ENCODE measurements at regions of chr12 and their contacts with region 1.

Region 1: GRCh38 chr12:42482445-42483237 is 106.9 kb downstream of the PRICKLE1 start:
- DNase-seq: peak; percentile 75
- ATAC-seq: peak; percentile 78
- H3K4me3 Mint-ChIP-seq: peak overlapping the region; percentile 66
- H3K27ac Mint-ChIP-seq: no peak overlapping the region
- H3K4me1 Mint-ChIP-seq: peaks cover 9% of the 10 kb centered on the region
- H3K27me3 Mint-ChIP-seq: peaks cover 71% of the 10 kb centered on the region

Region 2: DNA sequence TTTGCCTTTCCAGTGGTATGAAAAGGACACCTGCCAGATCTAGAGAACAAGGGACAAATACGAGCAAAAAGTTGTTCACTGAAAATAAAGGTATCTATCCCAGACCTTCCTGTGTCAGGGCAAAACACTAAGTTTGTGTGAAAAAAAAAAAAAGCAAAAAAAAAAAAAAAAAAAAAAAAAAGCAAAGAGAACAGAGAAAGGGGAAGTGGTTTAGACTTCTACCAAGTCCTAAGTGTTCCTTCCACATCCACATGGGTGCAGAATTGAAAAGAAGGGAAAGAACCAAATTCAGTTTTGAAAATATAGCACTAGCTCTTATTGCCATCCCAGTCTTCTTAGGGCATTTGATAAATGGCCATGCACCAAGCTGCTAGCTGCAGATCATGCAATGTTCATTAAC is 198.5 kb before region 1 on chr12:
- CTCF ChIA-PET with region 1: no interaction called
- POLR2A ChIA-PET with region 1: no interaction called
- intact Hi-C with region 1: no loop called
- DNase-seq: no peak
- ATAC-seq: no peak
- H3K4me3 Mint-ChIP-seq: no peak overlapping the region
- H3K27ac Mint-ChIP-seq: no peak overlapping the region
- H3K4me1 Mint-ChIP-seq: peaks cover 4% of the 10 kb centered on the region
- H3K27me3 Mint-ChIP-seq: peaks cover 3% of the 10 kb centered on the region

Region 3: DNA sequence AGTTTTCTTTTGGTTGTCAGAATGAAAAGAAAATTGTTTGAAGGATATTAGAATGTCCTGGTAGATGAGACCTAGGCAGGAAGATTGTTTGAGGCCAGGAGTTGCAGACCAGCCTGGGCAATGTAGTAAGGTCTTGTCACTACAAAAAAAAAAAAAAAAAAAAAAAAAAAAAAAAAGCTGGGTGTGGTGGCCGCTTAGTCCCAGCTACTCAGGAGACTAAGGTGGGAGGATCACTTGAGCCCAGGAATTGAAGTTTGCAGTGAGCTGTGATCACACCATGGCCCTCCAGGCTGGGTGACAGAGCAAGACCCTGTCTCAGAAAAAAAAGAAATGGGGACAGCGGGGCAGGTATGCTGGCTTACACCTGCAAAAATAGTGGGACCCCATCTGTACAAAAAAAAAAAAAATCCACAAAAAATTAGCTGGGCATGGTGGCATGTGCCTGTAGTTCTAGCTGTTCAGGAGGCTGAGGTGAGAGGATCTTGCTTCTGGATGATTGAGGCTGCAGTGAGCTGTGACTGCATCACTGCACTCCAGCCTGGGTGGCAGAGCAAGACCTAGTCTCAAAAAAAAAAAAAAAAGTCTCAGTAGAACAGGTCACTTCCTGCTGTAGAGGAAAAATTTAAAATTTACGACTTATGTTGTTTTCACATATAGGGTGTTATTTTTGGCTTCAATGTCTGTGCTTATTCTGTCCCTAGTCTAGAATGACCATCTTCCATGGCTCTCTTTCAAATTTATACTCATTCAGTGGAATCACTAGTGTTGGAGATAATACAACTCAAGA is 86.0 kb before region 1 on chr12:
- CTCF ChIA-PET with region 1: no interaction called
- POLR2A ChIA-PET with region 1: no interaction called
- intact Hi-C with region 1: no loop called
- DNase-seq: no peak
- ATAC-seq: peak; percentile 26
- H3K4me3 Mint-ChIP-seq: no peak overlapping the region
- H3K27ac Mint-ChIP-seq: no peak overlapping the region
- H3K4me1 Mint-ChIP-seq: no peaks in the 10 kb centered on the region
- H3K27me3 Mint-ChIP-seq: no peaks in the 10 kb centered on the region

Region 4: DNA sequence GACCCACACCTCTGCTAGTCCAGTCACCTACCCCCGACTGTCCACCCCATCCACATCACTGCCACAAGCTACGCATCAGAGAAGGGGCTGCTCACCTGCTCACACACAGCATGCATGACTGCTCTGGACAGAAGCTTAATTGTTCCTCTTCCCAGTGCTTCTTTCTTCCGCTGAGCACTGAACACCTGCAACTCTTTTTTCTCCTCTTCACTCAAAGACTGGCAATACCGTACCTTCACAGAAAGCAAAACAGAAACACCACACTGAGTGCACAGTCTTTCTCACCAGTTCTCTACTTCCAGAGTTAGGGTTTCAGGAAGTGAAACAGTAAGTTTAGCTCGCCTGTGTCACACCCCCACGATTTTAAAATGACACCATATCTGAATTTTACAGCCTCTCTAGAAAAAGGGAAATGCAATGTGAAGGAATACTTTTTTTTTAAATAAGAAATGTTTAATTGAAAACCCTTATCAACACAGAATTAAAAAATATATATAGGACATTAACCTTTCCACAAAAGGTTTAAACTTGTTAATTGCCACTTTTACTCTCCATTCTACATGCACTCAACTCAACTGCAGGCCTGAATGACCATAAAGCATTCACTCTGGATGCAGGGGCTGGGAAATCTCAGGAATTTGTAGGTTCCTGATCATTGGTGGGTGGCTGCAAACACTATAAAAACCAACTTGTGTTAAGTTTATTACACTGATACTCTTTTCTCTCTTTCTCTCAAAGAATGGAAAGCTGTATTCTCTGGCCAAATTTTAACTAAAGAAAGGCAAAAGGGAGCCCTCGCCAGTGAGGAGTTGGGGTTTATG is 13.1 kb before region 1 on chr12:
- CTCF ChIA-PET with region 1: interaction called, 18 read pairs
- POLR2A ChIA-PET with region 1: no interaction called
- intact Hi-C with region 1: no loop called
- DNase-seq: peak; percentile 7
- ATAC-seq: peak; percentile 92
- H3K4me3 Mint-ChIP-seq: peak overlapping the region; percentile 43
- H3K27ac Mint-ChIP-seq: peak overlapping the region; percentile 6
- H3K4me1 Mint-ChIP-seq: peaks cover 16% of the 10 kb centered on the region
- H3K27me3 Mint-ChIP-seq: peaks cover 23% of the 10 kb centered on the region

Region 5: GRCh38 chr12:42568952-42569915 is 86.6 kb after region 1 on chr12:
- CTCF ChIA-PET with region 1: interaction called, 17 read pairs
- POLR2A ChIA-PET with region 1: no interaction called
- intact Hi-C with region 1: loop called (anchors 1 to 2 kb)
- DNase-seq: no peak
- ATAC-seq: no peak
- H3K4me3 Mint-ChIP-seq: no peak overlapping the region
- H3K27ac Mint-ChIP-seq: no peak overlapping the region
- H3K4me1 Mint-ChIP-seq: no peaks in the 10 kb centered on the region
- H3K27me3 Mint-ChIP-seq: peaks cover 10% of the 10 kb centered on the region

Region 6: DNA sequence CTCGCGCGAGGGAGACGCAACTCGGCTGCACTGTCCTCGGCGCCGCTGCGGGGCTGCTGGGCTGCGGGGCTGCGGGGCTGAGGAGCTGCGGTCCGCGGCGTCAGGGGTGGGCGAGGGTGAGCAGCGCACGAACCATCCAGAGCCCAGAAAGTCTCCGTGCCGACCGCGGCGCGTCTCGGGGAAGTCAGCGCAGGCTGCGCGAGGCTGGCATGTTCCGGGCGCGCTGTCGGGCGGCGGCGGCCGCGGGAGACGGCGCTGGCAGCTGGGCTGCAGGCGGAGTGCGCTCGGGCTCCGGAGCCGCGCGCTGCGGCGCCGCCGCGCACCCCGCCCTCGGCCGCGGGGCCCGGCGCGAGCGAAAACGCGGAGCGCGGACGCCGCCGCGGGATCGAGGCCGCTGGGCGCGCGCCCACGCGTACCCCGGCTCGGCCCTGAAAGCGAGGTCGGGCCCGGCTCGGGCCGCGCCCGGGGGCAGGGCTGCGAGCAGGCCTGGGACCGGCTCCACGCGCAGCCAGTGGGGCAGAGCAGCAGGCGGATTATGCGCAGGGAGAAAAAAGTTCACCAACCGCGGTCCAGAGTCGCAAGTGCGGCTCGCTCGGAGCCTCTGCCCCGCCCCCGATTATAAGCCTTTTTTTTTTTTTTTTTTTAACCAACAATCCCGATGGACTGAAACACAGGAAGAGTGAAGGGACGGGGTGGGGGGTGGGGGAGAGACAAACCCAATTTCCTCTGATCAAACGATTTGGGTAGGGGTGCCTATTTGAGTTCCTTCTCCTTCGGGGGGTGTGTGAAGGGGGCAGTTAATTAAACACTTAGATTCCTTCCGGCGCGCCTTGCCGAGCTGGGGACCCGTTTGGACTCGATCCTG is 107.1 kb after region 1 on chr12 and contains the start of gene PRICKLE1:
- CTCF ChIA-PET with region 1: no interaction called
- POLR2A ChIA-PET with region 1: no interaction called
- intact Hi-C with region 1: loop called in 1 of 2 experiments (anchors 5 kb)
- DNase-seq: peak; percentile 56
- ATAC-seq: peak; percentile 84
- H3K4me3 Mint-ChIP-seq: peak within 1 kb of the TSS; percentile 59
- H3K27ac Mint-ChIP-seq: no peak within 1 kb of the TSS
- H3K4me1 Mint-ChIP-seq: peaks cover 16% of the 10 kb centered on the region
- H3K27me3 Mint-ChIP-seq: peaks cover 40% of the 10 kb centered on the region
- total RNA-seq, gene PRICKLE1: 0.21 to 0.30 TPM

Region 7: DNA sequence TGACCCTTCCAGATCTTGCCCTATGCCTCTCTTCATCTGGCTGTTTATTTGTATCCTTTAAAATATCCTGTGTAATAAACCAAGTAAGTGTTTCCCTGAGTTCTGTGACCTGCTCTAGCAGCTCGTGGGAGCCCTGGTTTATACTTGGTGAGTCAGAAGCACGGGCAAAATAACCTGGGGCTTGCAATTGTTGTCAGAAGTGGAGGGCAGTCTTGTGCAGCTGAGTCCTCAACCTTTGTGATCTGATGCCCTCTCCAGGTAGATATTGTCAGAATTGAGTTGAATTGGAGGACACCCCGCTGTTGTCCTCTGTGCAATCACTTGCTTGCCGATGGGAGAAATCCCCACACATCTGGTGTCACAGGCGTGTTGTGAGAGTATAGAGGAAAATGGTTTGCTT is 169.4 kb after region 1 on chr12:
- CTCF ChIA-PET with region 1: no interaction called
- POLR2A ChIA-PET with region 1: no interaction called
- intact Hi-C with region 1: no loop called
- DNase-seq: no peak
- ATAC-seq: no peak
- H3K4me3 Mint-ChIP-seq: no peak overlapping the region
- H3K27ac Mint-ChIP-seq: no peak overlapping the region
- H3K4me1 Mint-ChIP-seq: no peaks in the 10 kb centered on the region
- H3K27me3 Mint-ChIP-seq: no peaks in the 10 kb centered on the region

Region 8: GRCh38 chr12:43338848-43339526 is 856.3 kb after region 1 on chr12:
- CTCF ChIA-PET with region 1: no interaction called
- POLR2A ChIA-PET with region 1: no interaction called
- intact Hi-C with region 1: loop called (anchors 2 to 5 kb)
- DNase-seq: no peak
- ATAC-seq: no peak
- H3K4me3 Mint-ChIP-seq: no peak overlapping the region
- H3K27ac Mint-ChIP-seq: no peak overlapping the region
- H3K4me1 Mint-ChIP-seq: peaks cover 2% of the 10 kb centered on the region
- H3K27me3 Mint-ChIP-seq: peaks cover 4% of the 10 kb centered on the region

Region 9: GRCh38 chr12:43676183-43676813 is 1193.7 kb after region 1 on chr12:
- CTCF ChIA-PET with region 1: no interaction called
- POLR2A ChIA-PET with region 1: no interaction called
- intact Hi-C with region 1: loop called in 1 of 2 experiments (anchors 10 kb)
- DNase-seq: peak; percentile 42
- ATAC-seq: peak; percentile 66
- H3K4me3 Mint-ChIP-seq: no peak overlapping the region
- H3K27ac Mint-ChIP-seq: no peak overlapping the region
- H3K4me1 Mint-ChIP-seq: no peaks in the 10 kb centered on the region
- H3K27me3 Mint-ChIP-seq: peaks cover 13% of the 10 kb centered on the region

Region 10: DNA sequence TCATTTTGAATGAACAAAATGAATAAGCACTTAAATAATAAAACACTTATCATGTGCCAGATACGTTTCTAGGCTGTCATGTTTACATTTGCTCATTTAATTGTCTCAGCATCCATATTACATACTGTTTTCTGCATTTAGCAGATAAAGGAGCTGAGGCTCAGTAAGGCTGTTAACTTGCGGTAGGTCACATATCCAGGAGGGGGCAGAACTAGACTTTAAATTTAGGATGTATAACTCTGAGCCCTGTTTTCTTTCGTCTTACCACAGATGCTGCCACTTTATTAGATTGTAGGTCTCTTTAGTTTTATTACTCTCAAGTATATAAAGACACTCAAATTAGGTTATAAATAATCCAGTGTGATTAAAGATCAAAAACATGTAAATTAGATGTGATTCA is 1293.9 kb after region 1 on chr12:
- CTCF ChIA-PET with region 1: no interaction called
- POLR2A ChIA-PET with region 1: no interaction called
- intact Hi-C with region 1: no loop called
- DNase-seq: no peak
- ATAC-seq: peak; percentile 57
- H3K4me3 Mint-ChIP-seq: no peak overlapping the region
- H3K27ac Mint-ChIP-seq: no peak overlapping the region
- H3K4me1 Mint-ChIP-seq: no peaks in the 10 kb centered on the region
- H3K27me3 Mint-ChIP-seq: no peaks in the 10 kb centered on the region